Panc1 (cell line): ENCODE measurements at regions of chr18 and their contacts with region 1.

Region 1: DNA sequence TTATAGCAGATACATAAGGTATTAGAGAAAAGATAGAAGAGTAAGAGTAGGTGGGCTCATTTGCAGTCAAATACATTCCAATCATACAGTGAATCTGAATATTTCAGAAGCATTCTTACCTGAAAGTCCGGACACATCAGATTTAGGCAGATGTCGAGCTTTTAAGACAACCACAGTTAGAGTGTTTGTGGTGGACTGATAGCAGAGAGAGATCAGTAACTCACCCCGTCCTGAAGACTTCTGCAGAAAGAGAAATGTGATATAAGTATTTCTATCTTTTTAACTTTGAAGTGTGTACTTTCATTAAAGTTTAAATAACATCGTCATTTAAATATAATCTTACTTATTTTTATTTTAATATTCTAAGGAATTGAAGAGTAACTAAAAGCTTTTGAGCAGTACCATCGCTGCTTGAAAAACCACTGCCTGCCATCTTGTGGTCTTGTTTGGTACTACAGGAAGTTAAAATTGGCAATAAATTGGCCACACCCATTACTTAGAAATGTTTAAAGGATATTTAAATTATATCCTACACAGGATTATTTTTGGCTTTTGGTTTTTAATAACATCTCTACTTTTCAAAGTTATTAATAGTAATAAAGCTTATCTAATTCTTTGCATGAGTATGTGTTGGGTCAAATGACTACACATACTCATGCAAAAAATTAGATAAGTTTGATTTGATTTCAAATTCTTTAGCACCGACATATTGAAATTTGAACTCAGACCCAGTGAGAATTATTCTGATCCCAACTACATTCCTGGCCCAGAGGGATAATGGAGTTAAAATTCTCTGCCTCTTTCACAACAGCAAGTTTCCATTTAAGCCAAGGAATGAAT is 5.5 kb downstream of the SYT4 start:
- DNase-seq: peak; percentile 32
- ATAC-seq: no peak
- H3K4me3 ChIP-seq: no peak overlapping the region
- H3K27ac ChIP-seq: no peak overlapping the region
- H3K4me1 ChIP-seq: no peaks in the 10 kb centered on the region
- H3K27me3 ChIP-seq: no peaks in the 10 kb centered on the region
- CTCF ChIP-seq: peak; percentile 53; the same call in 1 of the 2 replicates

Region 2: DNA sequence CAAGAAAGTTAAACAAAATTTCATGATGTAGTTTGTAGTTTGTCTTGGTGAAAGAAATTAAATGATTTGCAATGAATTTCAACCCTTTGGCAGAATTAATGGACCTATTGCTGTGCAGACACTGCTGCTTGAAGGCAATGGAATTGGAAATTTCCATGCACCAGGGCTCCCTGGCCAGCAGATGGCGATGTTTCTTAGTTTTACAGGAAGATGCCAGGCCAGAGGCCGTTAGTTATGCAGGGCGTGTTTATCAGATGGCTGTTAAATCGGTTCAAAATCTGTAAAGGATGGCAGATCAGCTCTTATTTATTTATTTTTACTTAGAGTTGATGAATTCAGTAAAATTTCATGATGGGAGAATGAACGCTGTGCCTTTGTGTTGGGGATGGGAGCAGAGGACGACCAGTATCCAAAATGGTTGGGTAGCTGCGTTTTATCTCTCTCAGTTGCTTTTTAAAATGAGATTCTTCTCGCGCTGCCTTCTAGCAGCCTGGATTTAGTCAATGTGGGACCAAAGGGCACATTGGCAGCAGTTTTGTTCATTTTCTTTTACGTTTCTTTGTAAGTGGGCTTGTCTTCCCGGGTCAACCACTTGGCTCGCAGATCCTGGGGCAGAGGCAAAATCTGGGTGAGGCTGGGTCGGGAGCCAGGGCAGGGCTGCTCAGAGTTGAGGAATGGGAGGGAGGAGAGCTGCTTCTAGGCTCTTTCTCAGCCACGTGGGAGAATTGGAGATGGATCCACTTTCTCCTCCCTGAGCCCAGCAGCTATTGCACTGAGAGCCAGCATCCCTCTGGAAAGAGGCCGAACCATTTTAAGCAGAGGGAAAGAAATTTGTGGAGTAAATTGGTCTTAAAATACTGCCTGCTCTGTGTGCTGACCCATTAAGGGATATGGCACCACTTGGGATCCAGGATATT is 972.8 kb before region 1 on chr18:
- CTCF ChIA-PET with region 1: no interaction called
- POLR2A ChIA-PET with region 1: no interaction called
- in situ Hi-C with region 1: no loop called
- intact Hi-C with region 1: loop called (anchors 10 kb)
- DNase-seq: peak; percentile 43
- ATAC-seq: peak; percentile 76
- H3K4me3 ChIP-seq: peak overlapping the region in 1 of 2 experiments; percentile 3; a peak in 1 of 4 replicates
- H3K27ac ChIP-seq: no peak overlapping the region
- H3K4me1 ChIP-seq: no peaks in the 10 kb centered on the region
- H3K27me3 ChIP-seq: no peaks in the 10 kb centered on the region
- CTCF ChIP-seq: peak; percentile 73

Region 3: GRCh38 chr18:43170586-43170985 is 101.2 kb before region 1 on chr18:
- CTCF ChIA-PET with region 1: no interaction called
- POLR2A ChIA-PET with region 1: no interaction called
- in situ Hi-C with region 1: no loop called
- intact Hi-C with region 1: no loop called
- DNase-seq: no peak
- ATAC-seq: no peak
- H3K4me3 ChIP-seq: no peak overlapping the region
- H3K27ac ChIP-seq: no peak overlapping the region
- H3K4me1 ChIP-seq: no peaks in the 10 kb centered on the region
- H3K27me3 ChIP-seq: no peaks in the 10 kb centered on the region
- CTCF ChIP-seq: no peak